CD8-positive, alpha-beta T cell (primary cell): ENCODE measurements at regions of chr7 and their contacts with region 1.

Region 1: GRCh38 chr7:6516387-6516983 is 34.8 kb downstream of the GRID2IP start:
- DNase-seq: peak; percentile 44 to 76 (median 68)
- ATAC-seq: peak; percentile 74
- H3K4me3 ChIP-seq: peak overlapping the region; percentile 38 to 43
- H3K4me3 Mint-ChIP-seq: peak overlapping the region; percentile 67
- H3K27ac ChIP-seq: no peak overlapping the region
- H3K27ac Mint-ChIP-seq: no peak overlapping the region
- H3K4me1 ChIP-seq: no peaks in the 10 kb centered on the region
- H3K4me1 Mint-ChIP-seq: peaks cover 7% of the 10 kb centered on the region
- H3K27me3 ChIP-seq: peaks cover 0 to 2% of the 10 kb centered on the region in 2 experiments
- H3K27me3 Mint-ChIP-seq: no peaks in the 10 kb centered on the region
- CTCF ChIP-seq: peak; percentile 84

Region 2: DNA sequence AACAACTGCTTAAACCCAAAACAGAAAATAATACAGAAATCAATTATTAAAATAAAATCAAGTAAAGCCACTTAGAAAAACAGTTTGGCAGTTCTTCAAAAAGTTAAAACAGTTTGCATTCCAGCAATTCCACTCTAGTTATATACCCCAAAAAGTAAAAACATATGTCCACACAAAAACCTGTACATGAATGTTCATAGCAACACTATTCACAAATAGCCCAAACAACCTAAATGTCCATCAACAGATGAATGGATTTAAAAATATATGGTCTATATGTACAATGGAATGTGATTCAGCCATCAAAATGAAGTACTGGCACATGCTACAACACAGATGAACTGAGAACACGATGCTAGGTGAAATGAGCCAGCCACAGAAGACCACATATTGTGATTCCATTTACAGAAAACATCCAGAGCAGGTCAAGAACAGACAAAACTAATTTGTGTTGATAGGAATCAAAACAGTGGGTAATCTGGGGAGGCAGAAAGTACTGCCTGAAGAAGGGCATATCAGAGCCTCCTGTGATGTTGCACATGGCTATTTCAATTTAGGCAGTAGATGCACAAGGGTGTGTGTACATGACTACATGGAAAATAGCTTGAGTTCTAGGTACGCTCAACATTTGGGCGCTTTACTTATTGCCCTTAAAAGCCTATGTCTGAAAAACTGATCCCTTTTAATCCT is 310.4 kb before region 1 on chr7:
- CTCF ChIA-PET with region 1: no interaction called
- POLR2A ChIA-PET with region 1: no interaction called
- intact Hi-C with region 1: no loop called
- DNase-seq: no peak
- ATAC-seq: no peak
- H3K4me3 ChIP-seq: no peak overlapping the region
- H3K4me3 Mint-ChIP-seq: no peak overlapping the region
- H3K27ac ChIP-seq: no peak overlapping the region
- H3K27ac Mint-ChIP-seq: no peak overlapping the region
- H3K4me1 ChIP-seq: no peaks in the 10 kb centered on the region
- H3K4me1 Mint-ChIP-seq: no peaks in the 10 kb centered on the region
- H3K27me3 ChIP-seq: no peaks in the 10 kb centered on the region
- H3K27me3 Mint-ChIP-seq: no peaks in the 10 kb centered on the region
- CTCF ChIP-seq: no peak

Region 3: GRCh38 chr7:6505685-6506574 is 10.6 kb before region 1 on chr7:
- CTCF ChIA-PET with region 1: interaction called, 10 read pairs
- POLR2A ChIA-PET with region 1: interaction called, 6 read pairs
- intact Hi-C with region 1: no loop called
- DNase-seq: no peak
- ATAC-seq: no peak
- H3K4me3 ChIP-seq: no peak overlapping the region
- H3K4me3 Mint-ChIP-seq: peak overlapping the region; percentile 22
- H3K27ac ChIP-seq: no peak overlapping the region
- H3K27ac Mint-ChIP-seq: no peak overlapping the region
- H3K4me1 ChIP-seq: peaks cover 14% of the 10 kb centered on the region
- H3K4me1 Mint-ChIP-seq: peaks cover 3% of the 10 kb centered on the region
- H3K27me3 ChIP-seq: no peaks in the 10 kb centered on the region
- H3K27me3 Mint-ChIP-seq: no peaks in the 10 kb centered on the region
- CTCF ChIP-seq: no peak

Region 4: DNA sequence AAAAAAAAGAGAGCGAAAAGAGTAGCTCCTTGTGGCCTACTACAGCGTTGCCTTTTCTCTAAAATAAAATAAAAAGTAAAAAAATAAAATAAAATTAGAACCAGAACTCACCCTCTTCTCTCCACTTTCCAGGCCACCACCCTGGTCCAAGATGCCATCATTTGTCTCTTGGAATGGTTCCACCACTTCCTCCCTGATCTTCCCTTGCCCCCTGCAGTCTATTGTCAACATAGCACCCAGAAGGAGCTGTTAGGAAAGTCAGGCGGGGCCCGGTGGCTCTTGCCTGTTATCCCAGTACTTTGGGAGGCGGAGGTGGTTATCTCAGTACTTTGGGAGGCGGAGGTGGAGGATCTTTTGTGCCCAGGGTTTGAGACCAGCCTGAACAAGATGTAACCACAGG is 42.4 kb after region 1 on chr7:
- CTCF ChIA-PET with region 1: interaction called, 28 read pairs
- POLR2A ChIA-PET with region 1: no interaction called
- intact Hi-C with region 1: no loop called
- DNase-seq: peak in 3 of 9 experiments; percentile 18 to 56 (median 33)
- ATAC-seq: peak; percentile 30
- H3K4me3 ChIP-seq: no peak overlapping the region
- H3K4me3 Mint-ChIP-seq: no peak overlapping the region
- H3K27ac ChIP-seq: no peak overlapping the region
- H3K27ac Mint-ChIP-seq: no peak overlapping the region
- H3K4me1 ChIP-seq: peaks cover 7% of the 10 kb centered on the region
- H3K4me1 Mint-ChIP-seq: peaks cover 7% of the 10 kb centered on the region
- H3K27me3 ChIP-seq: no peaks in the 10 kb centered on the region
- H3K27me3 Mint-ChIP-seq: no peaks in the 10 kb centered on the region
- CTCF ChIP-seq: peak; percentile 27

Region 5: DNA sequence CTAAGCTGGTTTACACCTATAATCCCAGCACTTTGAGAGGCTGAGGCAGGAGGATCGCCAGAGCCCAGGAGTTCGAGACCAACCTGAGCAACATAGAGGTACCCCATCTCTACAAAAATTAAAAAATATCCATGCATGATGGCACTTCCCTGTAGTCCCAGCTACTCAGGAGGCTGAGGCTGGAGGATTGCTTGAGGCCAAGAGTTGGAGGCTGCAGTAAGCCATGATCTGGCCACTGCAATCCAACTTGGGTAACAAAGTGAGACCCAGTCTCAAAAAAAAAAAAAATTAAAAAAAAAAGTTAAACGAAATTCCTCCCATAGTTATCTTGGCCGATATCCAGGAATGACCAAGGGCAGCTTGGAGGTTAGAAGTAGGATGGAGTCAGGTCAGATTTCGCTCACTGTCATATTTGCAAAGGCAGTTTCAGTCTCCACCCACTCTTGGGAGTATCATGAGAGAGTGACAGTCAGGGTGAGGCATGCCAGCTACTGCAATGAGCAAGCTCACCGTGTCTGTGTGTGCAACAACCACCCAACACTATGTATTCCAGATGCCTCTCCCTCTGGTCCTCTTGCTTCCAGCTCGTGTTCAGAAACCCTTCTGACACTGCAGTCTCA is 54.8 kb after region 1 on chr7:
- CTCF ChIA-PET with region 1: interaction called, 9 read pairs
- POLR2A ChIA-PET with region 1: no interaction called
- intact Hi-C with region 1: loop called in 1 of 2 experiments (anchors 5 kb)
- DNase-seq: no peak
- ATAC-seq: no peak
- H3K4me3 ChIP-seq: no peak overlapping the region
- H3K4me3 Mint-ChIP-seq: no peak overlapping the region
- H3K27ac ChIP-seq: no peak overlapping the region
- H3K27ac Mint-ChIP-seq: no peak overlapping the region
- H3K4me1 ChIP-seq: no peaks in the 10 kb centered on the region
- H3K4me1 Mint-ChIP-seq: peaks cover 2% of the 10 kb centered on the region
- H3K27me3 ChIP-seq: no peaks in the 10 kb centered on the region
- H3K27me3 Mint-ChIP-seq: peaks cover 6% of the 10 kb centered on the region
- CTCF ChIP-seq: no peak

Region 6: DNA sequence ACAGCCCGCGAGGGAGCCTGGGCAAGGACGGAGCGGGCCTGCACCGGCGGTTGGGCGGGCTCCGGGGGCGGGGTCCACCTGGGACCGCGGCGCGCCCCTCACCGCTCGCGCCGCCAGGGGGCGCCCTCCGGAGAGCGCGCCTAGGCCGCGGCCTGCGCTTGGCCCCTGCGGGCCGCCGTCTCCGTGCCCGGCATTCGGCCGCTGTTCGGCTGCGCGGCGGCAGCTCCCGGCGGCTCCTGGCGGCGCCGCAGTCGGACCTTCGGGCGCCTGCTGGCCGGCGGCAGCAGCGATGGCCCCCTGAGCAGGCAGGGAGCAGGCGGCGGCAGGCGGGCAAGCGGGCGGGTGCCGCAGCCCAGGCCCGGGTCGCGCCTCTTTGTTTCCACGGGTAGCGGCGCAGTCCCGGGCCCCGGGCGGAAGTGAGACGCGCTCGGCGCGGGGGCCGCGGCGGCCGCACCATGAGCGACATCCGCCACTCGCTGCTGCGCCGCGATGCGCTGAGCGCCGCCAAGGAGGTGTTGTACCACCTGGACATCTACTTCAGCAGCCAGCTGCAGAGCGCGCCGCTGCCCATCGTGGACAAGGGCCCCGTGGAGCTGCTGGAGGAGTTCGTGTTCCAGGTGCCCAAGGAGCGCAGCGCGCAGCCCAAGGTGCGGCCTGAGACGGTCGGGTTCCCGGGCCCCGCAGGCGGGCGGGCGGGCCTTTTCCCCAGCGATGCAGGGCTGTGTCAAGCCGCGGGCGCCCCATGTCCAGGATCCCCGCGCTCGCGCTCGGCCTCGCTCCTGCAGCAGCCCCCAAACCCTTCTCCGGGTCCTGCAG is 73.6 kb after region 1 on chr7 and contains the start of gene INTS15:
- CTCF ChIA-PET with region 1: interaction called, 11 read pairs
- POLR2A ChIA-PET with region 1: no interaction called
- intact Hi-C with region 1: no loop called
- DNase-seq: peak; percentile 66 to 93 (median 82)
- ATAC-seq: peak; percentile 90
- H3K4me3 ChIP-seq: peak within 1 kb of the TSS; percentile 64 to 93
- H3K4me3 Mint-ChIP-seq: peak within 1 kb of the TSS; percentile 89
- H3K27ac ChIP-seq: peak within 1 kb of the TSS; percentile 69 to 83
- H3K27ac Mint-ChIP-seq: peak within 1 kb of the TSS; percentile 94
- H3K4me1 ChIP-seq: peaks cover 24% of the 10 kb centered on the region
- H3K4me1 Mint-ChIP-seq: peaks cover 21% of the 10 kb centered on the region
- H3K27me3 ChIP-seq: no peaks in the 10 kb centered on the region
- H3K27me3 Mint-ChIP-seq: no peaks in the 10 kb centered on the region
- CTCF ChIP-seq: peak; percentile 56
- total RNA-seq, gene INTS15: 48.8 to 52.3 TPM

Region 7: DNA sequence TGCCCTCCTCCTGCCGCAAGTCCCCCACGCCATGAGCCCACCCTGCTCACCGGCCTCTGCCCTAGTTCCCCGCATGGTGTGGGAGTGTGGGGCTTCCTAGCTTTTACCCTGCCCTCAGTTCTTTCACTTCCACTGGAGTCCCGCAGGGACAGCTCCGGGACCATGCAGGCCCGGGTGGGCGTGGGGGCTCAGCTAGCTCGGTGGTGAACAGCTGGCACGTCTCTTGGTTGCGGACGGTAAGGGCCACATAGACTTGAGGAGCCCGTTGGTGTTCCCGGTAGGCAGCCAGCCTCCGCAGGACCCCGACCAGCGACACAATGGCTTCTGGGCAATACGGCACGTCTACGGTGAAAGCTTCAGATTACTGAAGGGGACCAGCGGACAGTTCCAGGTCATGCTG is 418.5 kb after region 1 on chr7:
- CTCF ChIA-PET with region 1: no interaction called
- POLR2A ChIA-PET with region 1: no interaction called
- intact Hi-C with region 1: loop called in 1 of 2 experiments (anchors 5 kb)
- DNase-seq: no peak
- ATAC-seq: no peak
- H3K4me3 ChIP-seq: no peak overlapping the region
- H3K4me3 Mint-ChIP-seq: no peak overlapping the region
- H3K27ac ChIP-seq: no peak overlapping the region
- H3K27ac Mint-ChIP-seq: no peak overlapping the region
- H3K4me1 ChIP-seq: no peaks in the 10 kb centered on the region
- H3K4me1 Mint-ChIP-seq: peaks cover 6% of the 10 kb centered on the region
- H3K27me3 ChIP-seq: no peaks in the 10 kb centered on the region
- H3K27me3 Mint-ChIP-seq: no peaks in the 10 kb centered on the region
- CTCF ChIP-seq: no peak

Region 8: DNA sequence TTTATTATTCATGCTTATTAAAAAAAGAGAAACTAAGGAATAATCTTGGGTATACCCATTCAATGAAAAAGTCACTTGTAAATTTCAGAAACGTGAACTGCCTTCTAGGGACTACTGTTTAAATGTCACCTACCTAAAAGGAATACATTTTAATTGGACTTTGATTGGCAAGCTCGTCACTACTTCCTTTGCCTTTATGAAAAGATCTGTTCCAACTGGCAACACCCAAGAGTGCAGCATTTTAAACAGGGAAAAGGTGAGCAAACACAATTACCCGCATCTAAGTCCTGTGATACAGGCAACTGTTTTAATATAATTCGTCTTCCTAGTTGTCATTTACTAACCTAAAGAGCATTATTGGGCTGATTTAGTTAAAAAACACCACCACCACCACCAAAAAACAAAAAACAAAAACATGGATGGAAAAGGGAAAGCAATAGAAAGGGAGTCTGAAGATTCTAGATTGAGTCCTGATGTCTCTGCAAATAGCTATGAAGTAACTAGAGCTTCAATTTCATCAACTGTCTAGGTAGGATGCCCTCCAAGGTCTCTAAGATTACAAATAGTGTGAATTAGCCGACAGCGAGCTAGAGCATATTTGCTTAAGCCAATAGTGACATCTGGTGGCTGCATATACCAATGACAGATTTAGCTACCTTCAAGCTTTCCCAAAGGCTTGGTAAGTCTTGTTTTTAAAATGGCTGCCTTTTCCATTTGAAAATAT is 1779.3 kb after region 1 on chr7:
- CTCF ChIA-PET with region 1: no interaction called
- POLR2A ChIA-PET with region 1: no interaction called
- intact Hi-C with region 1: loop called in 1 of 2 experiments (anchors 5 kb)
- DNase-seq: peak in 6 of 9 experiments; percentile 7 to 81 (median 22)
- ATAC-seq: peak; percentile 78
- H3K4me3 ChIP-seq: no peak overlapping the region
- H3K4me3 Mint-ChIP-seq: no peak overlapping the region
- H3K27ac ChIP-seq: no peak overlapping the region
- H3K27ac Mint-ChIP-seq: no peak overlapping the region
- H3K4me1 ChIP-seq: no peaks in the 10 kb centered on the region
- H3K4me1 Mint-ChIP-seq: no peaks in the 10 kb centered on the region
- H3K27me3 ChIP-seq: no peaks in the 10 kb centered on the region
- H3K27me3 Mint-ChIP-seq: peaks cover 11% of the 10 kb centered on the region
- CTCF ChIP-seq: peak; percentile 67